Mucosa of descending colon (tissue), 3 donors: ENCODE measurements at regions of chr1 and their contacts with region 1.

Region 1: GRCh38 chr1:109341944-109342930 is 35.4 kb upstream of the MYBPHL start:
- DNase-seq: peak in 1 of 3 donors; percentile 37
- ATAC-seq: peak; percentile 33
- H3K4me3 ChIP-seq: no peak overlapping the region
- H3K4me1 ChIP-seq: no peaks in the 10 kb centered on the region
- CTCF ChIP-seq: no peak

Region 2: DNA sequence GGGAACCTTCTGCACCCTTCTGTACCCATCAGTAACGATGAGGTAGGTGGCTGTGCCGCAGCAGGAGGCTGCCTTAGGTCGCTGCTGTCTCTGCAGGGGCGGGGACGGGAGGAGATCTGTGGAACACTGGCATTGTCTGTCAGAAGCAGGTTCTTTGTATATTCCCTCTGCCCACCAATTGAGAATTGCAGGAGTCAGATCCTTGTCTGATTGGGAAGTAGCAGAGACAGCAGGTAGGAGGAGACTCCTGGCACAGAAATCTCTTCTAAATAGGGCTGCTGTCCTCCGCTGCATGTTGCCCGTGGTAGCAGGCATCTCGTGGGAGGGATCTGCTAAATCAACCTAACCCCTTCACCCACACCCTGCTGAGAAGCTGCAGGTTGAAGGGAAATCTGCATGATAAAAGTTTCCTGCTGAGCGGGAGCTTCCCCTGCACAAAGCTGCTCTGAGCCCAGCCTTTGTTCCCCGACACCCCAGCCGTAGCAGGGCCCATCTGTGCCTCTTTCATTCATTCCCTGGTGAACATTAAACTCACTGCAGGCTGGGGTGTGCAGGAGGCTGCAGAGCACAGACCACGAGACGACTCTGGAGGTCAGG is 112.6 kb before region 1 on chr1:
- intact Hi-C with region 1: no loop called
- DNase-seq: no peak
- ATAC-seq: no peak
- H3K4me3 ChIP-seq: no peak overlapping the region
- H3K4me1 ChIP-seq: no peaks in the 10 kb centered on the region
- CTCF ChIP-seq: no peak

Region 3: GRCh38 chr1:109412551-109412950 is 70.3 kb after region 1 on chr1:
- intact Hi-C with region 1: loop called in 1 of 2 experiments (anchors 10 kb)
- DNase-seq: no peak
- ATAC-seq: no peak
- H3K4me3 ChIP-seq: no peak overlapping the region
- H3K4me1 ChIP-seq: no peaks in the 10 kb centered on the region
- CTCF ChIP-seq: no peak

Region 4: DNA sequence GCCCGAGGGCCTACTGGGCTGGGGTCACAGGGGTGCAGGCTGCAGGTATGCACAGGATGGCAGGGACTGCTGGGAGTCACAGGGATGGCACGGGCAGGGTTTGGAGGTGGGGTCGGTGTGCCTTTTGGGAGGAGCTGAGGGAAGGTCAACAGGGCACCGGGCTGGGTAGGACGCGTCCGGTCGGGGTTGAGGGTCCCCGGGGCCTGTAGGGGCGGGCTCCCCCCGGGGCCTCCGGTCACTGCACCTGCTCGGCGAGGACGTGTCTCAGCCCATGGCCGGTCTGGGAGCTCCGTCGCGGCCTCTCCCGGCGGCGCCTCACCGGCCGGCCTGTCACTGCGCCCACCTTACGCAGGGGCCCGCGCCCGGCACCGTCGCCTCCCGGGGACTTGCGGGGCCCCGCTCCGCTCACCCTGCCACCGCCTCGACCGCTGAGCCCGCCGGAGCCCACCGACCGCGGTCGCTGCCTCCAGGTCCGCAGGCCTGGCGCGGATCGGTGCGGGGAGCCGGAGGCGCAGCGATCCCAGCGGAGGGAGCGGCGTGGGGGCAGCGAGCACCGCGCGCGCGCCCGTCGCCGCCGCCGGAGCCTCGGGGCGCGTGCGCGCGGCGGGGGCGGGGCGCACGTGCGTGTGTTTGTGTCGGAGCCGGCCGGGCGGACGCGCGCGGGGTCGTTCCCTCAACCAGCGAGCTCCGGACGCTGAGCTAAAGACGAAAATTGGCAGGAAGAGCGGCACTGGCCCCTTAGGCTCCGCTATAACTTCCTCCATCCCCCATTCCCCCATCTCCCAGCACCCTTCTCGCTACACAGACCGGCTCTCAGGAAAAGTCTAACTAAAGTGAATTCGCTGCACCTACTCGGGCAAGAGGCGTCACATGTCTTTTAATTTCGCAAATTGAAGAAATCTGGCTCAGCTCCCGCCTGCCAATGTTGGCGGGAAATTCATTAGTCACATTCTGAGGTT is 167.2 kb after region 1 on chr1 and contains the start of gene AMIGO1:
- intact Hi-C with region 1: no loop called
- DNase-seq: peak in 2 of 3 donors; percentile 75 to 76
- ATAC-seq: peak; percentile 91
- H3K4me3 ChIP-seq: peak within 1 kb of the TSS; percentile 36
- H3K4me1 ChIP-seq: no peaks in the 10 kb centered on the region
- CTCF ChIP-seq: no peak
- total RNA-seq, gene AMIGO1: 2.2 to 9.9 (median 3.9) TPM